Esophagus squamous epithelium (tissue), 5 donors: ENCODE measurements at regions of chr21 and their contacts with region 1.

Region 1: DNA sequence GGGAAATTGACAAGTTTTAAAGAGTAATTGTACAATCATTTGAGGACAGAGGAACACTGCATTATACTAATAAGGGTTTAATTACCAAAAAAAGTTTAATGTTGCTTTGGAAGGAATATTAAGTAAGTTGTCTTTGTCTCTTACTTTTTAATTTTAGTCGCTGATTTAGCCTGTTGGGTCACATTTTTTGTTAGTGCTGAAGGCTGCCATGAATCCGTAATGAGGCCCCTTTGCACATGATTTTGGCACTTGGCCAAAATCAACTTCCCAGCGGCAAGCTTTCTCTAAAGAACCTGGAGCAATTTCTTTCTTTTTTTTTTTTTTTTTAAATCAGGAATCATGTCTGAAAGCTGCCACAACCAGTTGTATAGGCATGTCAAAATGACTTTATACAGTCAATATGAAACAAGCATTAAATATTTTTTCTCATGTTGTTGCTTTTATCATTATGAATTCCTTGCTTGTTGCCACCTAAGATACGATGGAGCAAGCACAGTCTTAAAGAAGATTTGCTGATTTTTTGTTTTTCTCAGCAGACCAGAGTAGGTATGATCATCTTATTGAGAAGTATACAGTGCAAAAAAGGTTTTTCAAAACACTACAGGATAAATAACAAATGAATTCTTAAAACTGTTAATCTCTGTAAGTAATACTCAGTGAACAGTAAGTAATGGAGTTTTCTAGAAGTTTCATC is 690.4 kb downstream of the USP25 start:
- DNase-seq: no peak
- H3K4me3 ChIP-seq: peak overlapping the region; percentile 35 to 66 (median 48)
- H3K27ac ChIP-seq: peak overlapping the region; percentile 78 to 91 (median 88)
- H3K4me1 ChIP-seq: peaks cover 0 to 34% (median 3%) of the 10 kb centered on the region in 3 donors
- H3K27me3 ChIP-seq: no peaks in the 10 kb centered on the region
- CTCF ChIP-seq: no peak
- POLR2A ChIP-seq: no peak

Region 2: DNA sequence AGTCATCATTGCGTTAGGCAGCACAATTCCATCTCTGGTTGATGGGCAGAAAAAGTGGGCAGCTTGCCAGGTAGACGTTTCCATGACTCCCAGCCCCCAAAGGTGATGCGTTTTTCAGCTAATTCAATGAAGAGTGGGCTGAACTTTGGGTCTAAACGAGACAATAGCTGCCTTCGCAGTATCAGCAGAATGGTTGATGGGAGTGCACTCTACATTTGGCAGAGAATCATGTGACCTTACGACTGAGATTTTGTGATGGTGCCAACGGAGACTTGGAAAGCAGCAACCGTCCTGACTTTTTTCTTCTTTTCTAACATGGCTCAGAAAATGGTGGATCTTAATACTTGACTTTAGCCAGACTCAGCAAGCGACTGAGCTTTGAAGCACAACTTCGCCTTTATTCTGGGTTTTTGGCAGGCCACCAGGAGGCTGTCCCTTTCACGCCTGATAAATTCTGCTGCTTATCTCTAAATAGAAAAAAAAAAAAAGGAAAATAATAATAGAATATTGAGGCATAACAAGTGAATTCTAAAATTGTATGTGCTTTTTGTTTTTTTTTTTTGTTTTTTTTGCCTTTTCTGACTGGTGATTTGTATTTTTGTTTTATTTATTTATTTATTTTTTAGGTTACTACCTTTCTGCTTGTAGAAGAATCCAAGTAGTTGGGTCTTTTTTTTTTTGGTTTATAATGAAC is 114.4 kb after region 1 on chr21:
- intact Hi-C with region 1: loop called (anchors 10 kb)
- DNase-seq: no peak
- H3K4me3 ChIP-seq: peak overlapping the region; percentile 7 to 66 (median 48)
- H3K27ac ChIP-seq: peak overlapping the region; percentile 78 to 93 (median 88)
- H3K4me1 ChIP-seq: peaks cover 0 to 39% (median 9%) of the 10 kb centered on the region in 3 donors
- H3K27me3 ChIP-seq: no peaks in the 10 kb centered on the region
- CTCF ChIP-seq: peak in 1 of 6 experiments; percentile 4
- POLR2A ChIP-seq: no peak